CD4-positive, alpha-beta T cell (primary cell): ENCODE measurements at regions of chr22 and their contacts with region 1.

Region 1: DNA sequence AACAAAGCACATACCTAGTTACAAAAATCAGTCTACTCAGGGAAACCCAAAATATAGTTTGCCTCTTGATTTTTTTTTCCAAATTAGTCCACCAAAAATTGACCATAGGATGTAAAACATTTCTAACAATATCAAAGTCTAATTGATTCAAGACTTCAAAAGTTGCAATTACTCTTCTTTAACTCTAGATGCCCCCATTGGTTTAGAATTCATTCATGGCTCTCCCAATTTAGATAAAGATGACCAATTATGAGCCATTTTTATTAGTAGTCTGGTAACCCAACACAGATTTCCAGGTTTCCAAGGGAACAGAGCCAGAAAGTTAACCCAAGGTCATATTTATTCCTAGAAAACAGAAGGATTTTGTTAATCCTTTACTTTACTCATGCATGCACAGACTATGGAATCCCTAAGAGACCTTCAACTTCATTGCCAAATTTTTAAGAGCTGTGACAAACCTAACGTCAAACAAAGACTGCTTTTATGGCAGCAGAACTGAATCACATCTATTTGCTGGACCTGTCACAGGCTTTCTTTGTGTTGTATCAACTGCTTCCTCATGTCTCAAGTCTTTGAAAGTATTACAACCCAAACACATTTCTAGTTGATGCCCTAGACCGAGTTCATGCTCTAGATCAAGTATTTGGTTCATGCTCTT is 55.3 kb downstream of the C22orf42 start:
- DNase-seq: peak in 3 of 14 experiments; percentile 41 to 50 (median 44)
- ATAC-seq: no peak
- H3K4me3 ChIP-seq: no peak overlapping the region
- H3K4me3 Mint-ChIP-seq: no peak overlapping the region
- H3K27ac ChIP-seq: no peak overlapping the region
- H3K27ac Mint-ChIP-seq: no peak overlapping the region
- H3K4me1 ChIP-seq: no peaks in the 10 kb centered on the region
- H3K4me1 Mint-ChIP-seq: no peaks in the 10 kb centered on the region
- H3K27me3 ChIP-seq: peaks cover 0 to 1% of the 10 kb centered on the region in 2 experiments
- H3K27me3 Mint-ChIP-seq: peaks cover 44% of the 10 kb centered on the region
- CTCF ChIP-seq: peak; percentile 61

Region 2: GRCh38 chr22:32158712-32159533 is 55.1 kb after region 1 on chr22 and contains the start of gene C22orf42:
- CTCF ChIA-PET with region 1: no interaction called
- POLR2A ChIA-PET with region 1: no interaction called
- intact Hi-C with region 1: loop called in 1 of 2 experiments (anchors 5 kb)
- DNase-seq: no peak
- ATAC-seq: no peak
- H3K4me3 ChIP-seq: no peak within 1 kb of the TSS
- H3K4me3 Mint-ChIP-seq: no peak within 1 kb of the TSS
- H3K27ac ChIP-seq: no peak within 1 kb of the TSS
- H3K27ac Mint-ChIP-seq: no peak within 1 kb of the TSS
- H3K4me1 ChIP-seq: no peaks in the 10 kb centered on the region
- H3K4me1 Mint-ChIP-seq: no peaks in the 10 kb centered on the region
- H3K27me3 ChIP-seq: peaks cover 0 to 5% of the 10 kb centered on the region in 2 experiments
- H3K27me3 Mint-ChIP-seq: peaks cover 5% of the 10 kb centered on the region
- CTCF ChIP-seq: no peak
- total RNA-seq, gene C22orf42: not detected

Region 3: DNA sequence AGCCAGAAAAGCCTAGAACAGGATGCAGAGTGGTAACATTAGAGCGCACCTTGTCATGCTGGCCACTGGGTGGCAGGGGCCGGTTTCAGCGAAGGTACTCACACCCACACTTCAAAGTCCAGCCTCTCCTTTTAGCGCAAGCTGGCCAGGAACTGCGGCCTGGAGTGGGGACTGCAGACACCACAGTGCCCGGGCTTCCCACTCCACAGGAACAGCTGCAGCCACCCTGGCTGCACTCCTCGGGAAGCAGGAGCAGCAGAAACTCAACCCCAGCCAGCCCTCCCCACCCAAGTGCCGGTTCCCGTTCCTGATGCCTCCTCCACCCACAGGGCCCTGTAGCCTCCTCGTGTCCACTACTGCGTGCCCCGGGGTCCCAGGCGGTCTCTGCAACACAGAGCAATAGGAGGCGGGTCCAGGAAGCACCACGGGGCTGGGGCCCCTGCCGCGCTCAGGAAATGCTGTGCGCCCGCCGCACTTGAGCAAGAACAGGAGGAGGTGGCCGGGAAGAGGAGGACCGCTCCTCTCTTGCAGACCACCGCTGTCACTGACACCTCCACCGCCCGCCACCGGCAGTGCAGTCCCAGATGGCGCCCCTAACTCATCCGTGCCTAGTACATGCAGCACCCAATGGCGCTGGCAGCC is 98.9 kb after region 1 on chr22:
- CTCF ChIA-PET with region 1: no interaction called
- POLR2A ChIA-PET with region 1: no interaction called
- intact Hi-C with region 1: loop called (anchors 2 kb)
- DNase-seq: peak in 6 of 14 experiments; percentile 16 to 64 (median 45)
- ATAC-seq: no peak
- H3K4me3 ChIP-seq: peak overlapping the region; percentile 58
- H3K4me3 Mint-ChIP-seq: peak overlapping the region; percentile 89
- H3K27ac ChIP-seq: no peak overlapping the region
- H3K27ac Mint-ChIP-seq: peak overlapping the region; percentile 52
- H3K4me1 ChIP-seq: peaks cover 70% of the 10 kb centered on the region
- H3K4me1 Mint-ChIP-seq: peaks cover 54% of the 10 kb centered on the region
- H3K27me3 ChIP-seq: peaks cover 9% of the 10 kb centered on the region in 2 experiments
- H3K27me3 Mint-ChIP-seq: peaks cover 31% of the 10 kb centered on the region
- CTCF ChIP-seq: peak; percentile 35

Region 4: GRCh38 chr22:32796865-32797573 is 693.2 kb after region 1 on chr22:
- CTCF ChIA-PET with region 1: no interaction called
- POLR2A ChIA-PET with region 1: no interaction called
- intact Hi-C with region 1: loop called (anchors 5 to 10 kb)
- DNase-seq: peak; percentile 25 to 76 (median 42)
- ATAC-seq: peak; percentile 62
- H3K4me3 ChIP-seq: no peak overlapping the region
- H3K4me3 Mint-ChIP-seq: no peak overlapping the region
- H3K27ac ChIP-seq: no peak overlapping the region
- H3K27ac Mint-ChIP-seq: no peak overlapping the region
- H3K4me1 ChIP-seq: peaks cover 10% of the 10 kb centered on the region
- H3K4me1 Mint-ChIP-seq: no peaks in the 10 kb centered on the region
- H3K27me3 ChIP-seq: peaks cover 14 to 27% of the 10 kb centered on the region in 2 experiments
- H3K27me3 Mint-ChIP-seq: peaks cover 37% of the 10 kb centered on the region
- CTCF ChIP-seq: peak; percentile 71